ENCODE measurements at regions of chr14 and their contacts with region 1.

Region 1: DNA sequence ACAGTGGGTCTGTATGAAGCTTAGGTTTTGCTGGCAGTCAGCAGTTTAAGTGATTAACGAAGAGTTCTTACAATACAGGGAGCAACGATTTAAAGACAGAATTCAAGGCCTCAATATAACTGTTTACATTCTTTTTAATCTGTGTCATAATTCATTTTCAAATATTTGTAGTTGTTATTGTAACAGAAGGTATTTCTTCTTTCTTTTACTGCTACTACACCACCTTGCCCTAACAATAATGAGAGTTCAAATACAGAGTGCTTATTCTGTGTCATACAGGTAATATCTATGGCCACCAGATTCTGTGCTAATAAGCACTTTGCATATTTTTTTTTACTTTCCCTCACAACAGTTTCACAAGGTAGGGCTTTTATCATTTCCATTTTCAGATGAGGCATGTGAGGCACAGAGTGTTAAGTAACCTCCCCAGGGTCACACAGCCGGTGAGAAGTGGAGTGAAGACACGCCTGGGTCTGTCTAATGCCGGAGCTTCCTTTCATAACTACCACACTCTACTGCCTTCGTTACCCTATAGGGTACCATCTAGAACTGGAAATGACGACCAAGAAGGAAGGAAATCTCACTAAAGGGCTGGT is 81.9 kb downstream of the PELI2 start:
- DNase-seq: no peak
- ATAC-seq: no peak
- H3K4me3 Mint-ChIP-seq: no peak overlapping the region
- H3K27ac Mint-ChIP-seq: no peak overlapping the region
- H3K4me1 Mint-ChIP-seq: peaks cover 21% of the 10 kb centered on the region
- H3K27me3 Mint-ChIP-seq: no peaks in the 10 kb centered on the region
- CTCF ChIP-seq: no peak

Region 2: GRCh38 chr14:56004786-56005185 is 195.3 kb before region 1 on chr14:
- CTCF ChIA-PET with region 1: no interaction called
- POLR2A ChIA-PET with region 1: no interaction called
- intact Hi-C with region 1: loop called (anchors 10 kb)
- DNase-seq: peak; percentile 66
- ATAC-seq: peak; percentile 65
- H3K4me3 Mint-ChIP-seq: no peak overlapping the region
- H3K27ac Mint-ChIP-seq: no peak overlapping the region
- H3K4me1 Mint-ChIP-seq: peaks cover 39% of the 10 kb centered on the region
- H3K27me3 Mint-ChIP-seq: peaks cover 56% of the 10 kb centered on the region
- CTCF ChIP-seq: no peak

Region 3: DNA sequence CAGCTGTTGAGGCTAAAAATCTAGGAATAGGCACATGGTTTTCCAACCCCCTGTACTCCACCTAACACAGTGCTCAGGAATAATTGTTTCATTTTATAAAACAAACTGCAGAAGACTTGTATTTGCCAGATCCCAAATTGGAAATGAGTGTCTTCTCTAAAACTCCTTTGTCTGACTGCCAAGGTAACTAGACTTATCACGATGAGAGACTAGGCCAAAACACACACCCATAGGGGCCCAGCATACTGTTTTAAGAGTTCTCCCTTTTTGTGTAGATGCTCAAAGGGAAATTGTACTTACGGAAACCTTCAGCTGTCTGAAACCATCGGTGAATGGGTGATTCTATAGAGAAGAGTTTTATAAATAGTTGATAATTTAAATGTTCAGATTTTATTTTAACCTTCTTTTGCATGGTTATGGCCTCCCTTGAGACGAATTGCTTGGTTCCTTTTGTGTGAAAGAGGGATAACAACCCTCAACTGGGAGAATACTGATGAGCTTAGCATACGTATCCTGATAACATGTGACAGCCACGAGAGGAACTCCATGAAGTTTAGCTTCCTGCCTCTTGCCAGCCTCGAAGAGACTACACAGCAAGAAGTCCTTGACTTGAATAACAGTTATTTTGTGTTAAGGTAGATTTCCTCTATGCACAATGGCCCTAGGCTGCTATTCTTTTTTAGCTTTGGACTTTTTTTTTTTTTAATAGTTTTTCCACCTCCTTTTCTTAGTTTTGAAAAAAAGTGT is 21.5 kb after region 1 on chr14:
- CTCF ChIA-PET with region 1: no interaction called
- POLR2A ChIA-PET with region 1: no interaction called
- intact Hi-C with region 1: no loop called
- DNase-seq: no peak
- ATAC-seq: no peak
- H3K4me3 Mint-ChIP-seq: no peak overlapping the region
- H3K27ac Mint-ChIP-seq: no peak overlapping the region
- H3K4me1 Mint-ChIP-seq: peaks cover 4% of the 10 kb centered on the region
- H3K27me3 Mint-ChIP-seq: no peaks in the 10 kb centered on the region
- CTCF ChIP-seq: no peak